Activated B cell treated with CpG ODN at 0.5 μM for 24 hours (primary cell): ENCODE measurements at regions of chr12 and their contacts with region 1.

Region 1: DNA sequence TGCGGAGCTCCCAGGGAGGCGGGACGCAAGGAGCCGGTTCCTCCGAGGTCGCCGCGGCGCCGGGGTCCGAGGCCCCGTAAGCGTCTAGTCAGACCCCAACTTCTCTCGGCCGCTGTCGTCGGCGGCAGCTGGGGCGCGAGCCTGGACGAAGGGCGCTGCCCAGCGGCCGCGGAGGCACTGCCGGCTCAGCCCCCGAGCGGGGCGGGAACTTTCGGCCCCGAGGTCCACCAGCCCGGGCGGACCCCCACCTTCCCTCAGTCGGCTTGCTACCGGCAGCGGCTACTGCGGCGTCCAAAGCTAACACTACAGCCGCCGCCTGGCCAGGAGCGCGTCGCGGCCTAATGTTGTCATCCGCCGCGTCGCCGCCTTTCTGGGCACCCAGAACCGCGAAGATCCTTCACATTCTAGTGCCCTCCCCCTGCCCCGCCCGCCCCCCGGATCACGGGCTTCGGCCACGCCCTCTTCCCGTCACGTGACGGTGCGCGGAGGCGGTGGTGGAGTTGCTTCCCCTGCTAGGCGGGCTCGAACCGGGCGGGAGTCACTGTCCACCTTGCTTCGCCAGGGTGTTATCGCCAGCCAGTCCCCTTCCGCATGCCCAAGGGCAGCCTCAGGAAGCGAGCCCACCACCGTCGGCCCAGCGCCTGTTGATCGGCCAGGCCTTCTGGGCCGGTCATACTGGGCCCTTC is at the start of gene OSBPL8:
- DNase-seq: peak; percentile 96
- ATAC-seq: peak; percentile 79
- H3K4me3 Mint-ChIP-seq: peak within 1 kb of the TSS; percentile 94
- H3K27ac Mint-ChIP-seq: peak within 1 kb of the TSS; percentile 95
- H3K4me1 Mint-ChIP-seq: peaks cover 45% of the 10 kb centered on the region
- H3K27me3 Mint-ChIP-seq: no peaks in the 10 kb centered on the region
- CTCF ChIP-seq: no peak
- total RNA-seq, gene OSBPL8: 73.8 and 79.6 TPM in 2 replicates

Region 2: DNA sequence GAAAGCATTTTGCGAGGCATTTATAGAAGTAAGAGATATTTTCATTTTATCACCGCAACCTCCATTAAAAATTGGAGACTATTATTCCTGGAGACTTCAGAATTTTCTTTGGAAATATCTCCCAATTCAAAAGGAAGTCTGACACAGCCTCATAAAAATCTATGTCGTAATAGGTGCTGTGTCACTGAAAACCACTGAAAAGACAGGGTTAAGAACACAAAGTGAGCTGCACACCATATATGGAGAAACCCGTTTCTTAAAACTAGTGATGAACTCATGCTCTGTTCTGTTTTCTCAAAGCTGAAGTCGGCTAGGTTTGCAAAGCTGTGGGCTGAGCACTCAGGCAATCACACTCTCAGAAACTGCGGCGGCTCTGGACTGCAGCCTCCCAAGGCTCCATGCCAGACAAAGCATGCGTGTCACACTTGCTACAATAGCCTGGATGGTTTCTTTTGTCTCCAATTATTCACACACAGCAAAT is 1079.0 kb before region 1 on chr12 and contains the start of gene GLIPR1:
- CTCF ChIA-PET with region 1: no interaction called
- POLR2A ChIA-PET with region 1: interaction called, 4 read pairs
- intact Hi-C with region 1: loop called (anchors 5 kb)
- DNase-seq: peak; percentile 40
- ATAC-seq: peak; percentile 79
- H3K4me3 Mint-ChIP-seq: peak within 1 kb of the TSS; percentile 96
- H3K27ac Mint-ChIP-seq: peak within 1 kb of the TSS; percentile 97
- H3K4me1 Mint-ChIP-seq: peaks cover 96% of the 10 kb centered on the region
- H3K27me3 Mint-ChIP-seq: no peaks in the 10 kb centered on the region
- CTCF ChIP-seq: no peak
- total RNA-seq, gene GLIPR1: 44.7 and 45.4 TPM in 2 replicates

Region 3: DNA sequence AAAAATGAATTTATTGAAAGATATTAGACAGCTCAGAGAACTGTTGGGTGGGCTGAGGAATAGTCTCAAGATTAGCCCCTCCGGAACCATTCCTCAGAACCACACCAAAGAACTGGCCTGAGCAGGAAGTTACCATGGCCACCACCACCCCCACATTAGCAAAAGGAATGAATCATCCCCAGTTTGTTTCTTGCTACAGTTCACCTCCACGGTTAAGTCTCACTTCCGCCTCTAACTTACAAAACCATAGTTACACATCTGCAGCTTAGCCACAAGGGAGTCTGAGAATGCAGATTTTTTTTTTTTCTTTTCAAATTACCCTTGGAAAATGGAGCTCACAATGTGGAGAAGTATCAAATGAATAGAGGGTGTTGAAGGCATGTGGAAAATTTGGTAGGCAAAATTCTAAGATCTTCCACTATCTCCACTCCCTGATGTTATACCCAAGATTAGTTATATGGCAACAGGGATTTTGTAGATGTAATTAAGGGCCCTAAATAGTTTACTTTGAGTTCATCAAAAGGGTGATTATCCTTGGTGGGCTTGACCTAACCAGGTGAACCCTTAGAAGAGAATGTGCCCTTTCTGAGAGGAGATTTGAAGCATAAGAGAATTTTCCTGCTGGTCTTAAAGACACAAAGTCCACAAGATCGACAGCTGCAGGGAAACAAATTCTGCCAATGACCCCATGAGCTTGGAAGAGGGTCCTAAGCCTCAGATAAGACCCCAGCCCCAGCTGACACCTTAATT is 918.3 kb before region 1 on chr12:
- CTCF ChIA-PET with region 1: no interaction called
- POLR2A ChIA-PET with region 1: no interaction called
- intact Hi-C with region 1: loop called (anchors 10 kb)
- DNase-seq: no peak
- ATAC-seq: peak; percentile 96
- H3K4me3 Mint-ChIP-seq: peak overlapping the region; percentile 26
- H3K27ac Mint-ChIP-seq: peak overlapping the region; percentile 51
- H3K4me1 Mint-ChIP-seq: peaks cover 33% of the 10 kb centered on the region
- H3K27me3 Mint-ChIP-seq: peaks cover under 1% of the 10 kb centered on the region
- CTCF ChIP-seq: no peak

Region 4: DNA sequence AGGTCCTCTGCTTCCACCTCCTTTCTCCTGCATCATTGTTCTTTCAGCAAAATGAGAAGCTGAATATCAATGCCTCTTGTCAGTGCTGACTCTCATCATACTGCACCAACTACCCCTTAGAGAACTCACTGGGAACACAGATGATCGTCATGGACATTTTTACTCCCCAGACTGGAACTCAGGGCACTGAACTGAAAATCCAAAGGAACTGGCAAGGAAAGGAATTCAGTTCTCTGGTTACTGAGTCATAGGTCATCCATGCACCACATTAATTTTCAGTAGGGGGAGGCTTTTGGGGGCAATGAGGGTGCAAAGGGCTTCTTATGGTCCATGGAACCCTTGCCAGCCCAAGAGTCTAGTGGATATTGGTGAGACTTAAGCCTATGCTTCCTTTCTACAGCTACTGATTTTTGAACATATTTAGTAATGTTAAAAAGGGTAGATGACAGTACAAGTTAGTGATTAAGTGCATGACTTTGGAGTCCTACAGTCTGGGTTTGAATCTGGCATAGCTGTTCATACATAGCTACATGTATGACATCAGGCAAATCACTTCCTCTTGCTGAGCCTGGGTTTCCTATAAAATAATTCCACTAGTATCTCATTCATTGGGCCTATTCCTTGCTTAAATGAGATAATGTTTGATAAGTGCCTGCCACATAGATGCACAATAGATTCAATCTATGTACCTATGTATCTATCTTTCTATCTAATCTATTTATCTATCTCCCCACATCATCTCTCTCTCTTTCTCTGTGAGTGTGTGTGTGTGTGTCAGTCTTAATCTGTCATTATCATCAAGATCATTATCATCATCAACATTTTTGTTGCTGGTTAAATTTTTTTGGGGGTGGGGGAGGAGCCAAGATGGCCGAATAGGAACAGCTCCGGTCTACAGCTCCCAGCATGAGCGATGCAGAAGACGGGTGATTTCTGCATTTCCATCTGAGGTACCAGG is 240.5 kb before region 1 on chr12:
- CTCF ChIA-PET with region 1: no interaction called
- POLR2A ChIA-PET with region 1: no interaction called
- intact Hi-C with region 1: no loop called
- DNase-seq: no peak
- ATAC-seq: no peak
- H3K4me3 Mint-ChIP-seq: no peak overlapping the region
- H3K27ac Mint-ChIP-seq: no peak overlapping the region
- H3K4me1 Mint-ChIP-seq: no peaks in the 10 kb centered on the region
- H3K27me3 Mint-ChIP-seq: peaks cover 2% of the 10 kb centered on the region
- CTCF ChIP-seq: no peak

Region 5: GRCh38 chr12:76337583-76337982 is 222.0 kb before region 1 on chr12:
- CTCF ChIA-PET with region 1: no interaction called
- POLR2A ChIA-PET with region 1: no interaction called
- intact Hi-C with region 1: no loop called
- DNase-seq: no peak
- ATAC-seq: no peak
- H3K4me3 Mint-ChIP-seq: no peak overlapping the region
- H3K27ac Mint-ChIP-seq: no peak overlapping the region
- H3K4me1 Mint-ChIP-seq: no peaks in the 10 kb centered on the region
- H3K27me3 Mint-ChIP-seq: no peaks in the 10 kb centered on the region
- CTCF ChIP-seq: no peak

Region 6: DNA sequence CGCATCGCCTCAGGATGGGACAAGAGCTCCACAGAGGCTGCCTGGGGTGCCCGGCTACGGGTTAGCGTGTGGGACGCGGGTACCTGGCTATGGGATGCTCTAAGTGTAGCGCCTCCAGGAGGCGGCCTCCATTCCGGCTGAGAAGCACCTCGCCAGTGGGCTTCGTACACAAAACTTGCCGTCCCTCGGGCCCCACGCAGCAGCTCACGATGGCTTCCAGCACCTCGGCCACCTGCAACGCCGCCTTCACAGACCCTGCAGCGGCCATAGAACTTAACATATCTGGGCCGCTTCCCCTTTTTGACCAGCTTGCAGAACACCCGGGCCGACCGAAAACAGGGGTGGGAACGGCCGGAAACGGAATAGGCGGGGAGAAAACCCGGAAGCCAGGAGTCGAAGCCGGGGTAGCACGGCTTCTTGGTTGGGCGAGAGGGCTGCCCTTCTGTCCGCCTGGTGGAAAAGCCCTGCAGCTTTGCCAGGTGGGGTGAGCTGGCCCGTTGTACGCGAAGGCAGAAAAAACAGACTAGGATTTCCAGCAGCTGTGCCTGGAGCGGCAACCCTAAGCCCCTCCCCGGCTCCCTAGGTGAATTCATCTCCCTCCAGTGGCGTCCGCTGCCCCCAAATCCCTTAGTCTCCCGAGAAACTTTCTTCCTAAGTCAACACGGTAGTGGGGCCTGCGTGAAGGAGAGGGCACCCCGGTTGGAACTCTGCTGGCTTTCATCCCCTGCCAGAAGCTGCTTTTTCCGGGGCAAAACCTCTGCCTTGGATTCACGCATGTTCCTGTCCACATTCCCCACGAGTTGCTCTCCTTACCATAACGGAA is 211.3 kb before region 1 on chr12 and contains the start of gene BBS10:
- CTCF ChIA-PET with region 1: no interaction called
- POLR2A ChIA-PET with region 1: interaction called, 19 read pairs
- intact Hi-C with region 1: loop called (anchors 1 kb)
- DNase-seq: peak; percentile 81
- ATAC-seq: peak; percentile 98
- H3K4me3 Mint-ChIP-seq: peak within 1 kb of the TSS; percentile 95
- H3K27ac Mint-ChIP-seq: peak within 1 kb of the TSS; percentile 93
- H3K4me1 Mint-ChIP-seq: peaks cover 35% of the 10 kb centered on the region
- H3K27me3 Mint-ChIP-seq: no peaks in the 10 kb centered on the region
- CTCF ChIP-seq: no peak
- total RNA-seq, gene BBS10: 7.9 and 8.0 TPM in 2 replicates

Region 7: DNA sequence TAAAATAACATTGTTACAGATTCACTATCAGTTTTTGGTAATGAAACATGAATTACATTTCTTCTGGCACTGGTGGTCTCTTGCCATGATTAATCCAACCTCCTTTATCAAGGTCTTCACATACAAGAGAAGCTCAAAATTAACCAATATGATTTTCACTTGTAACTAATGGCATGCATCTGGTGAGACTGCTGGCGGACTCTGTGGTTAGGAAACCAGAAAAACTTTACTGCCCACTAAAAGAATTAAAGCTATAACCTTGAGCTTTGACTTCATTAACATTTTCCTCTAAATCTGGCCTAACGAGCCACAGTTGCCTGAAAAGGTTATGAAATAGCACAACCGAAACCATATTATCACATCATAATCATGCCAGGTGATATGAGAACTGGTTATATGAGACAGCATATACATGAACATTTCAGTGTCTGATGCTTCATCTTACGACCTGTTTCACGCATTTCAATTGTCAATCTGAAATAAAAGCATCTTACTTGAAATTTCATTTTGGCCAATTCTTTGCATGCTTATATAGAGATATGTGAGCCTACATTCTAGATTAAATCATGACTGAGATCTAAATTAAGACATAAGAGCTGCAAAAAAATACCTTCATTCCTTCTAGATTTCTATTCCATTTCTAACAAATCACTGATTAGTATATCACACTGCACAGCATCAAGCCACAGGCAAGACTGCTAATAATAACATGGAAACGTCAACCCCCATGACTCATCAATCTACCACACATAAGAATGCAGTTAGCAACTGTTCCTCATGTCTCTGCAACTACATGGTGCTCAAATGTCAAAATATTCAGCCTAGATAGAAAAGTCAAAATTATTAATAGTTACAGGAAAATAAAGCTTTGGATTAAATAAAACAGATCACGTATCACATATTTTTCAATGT is 89.3 kb before region 1 on chr12:
- CTCF ChIA-PET with region 1: interaction called, 3 read pairs
- POLR2A ChIA-PET with region 1: interaction called, 3 read pairs
- intact Hi-C with region 1: loop called (anchors 5 kb)
- DNase-seq: no peak
- ATAC-seq: peak; percentile 84
- H3K4me3 Mint-ChIP-seq: no peak overlapping the region
- H3K27ac Mint-ChIP-seq: no peak overlapping the region
- H3K4me1 Mint-ChIP-seq: peaks cover 12% of the 10 kb centered on the region
- H3K27me3 Mint-ChIP-seq: no peaks in the 10 kb centered on the region
- CTCF ChIP-seq: no peak

Region 8: DNA sequence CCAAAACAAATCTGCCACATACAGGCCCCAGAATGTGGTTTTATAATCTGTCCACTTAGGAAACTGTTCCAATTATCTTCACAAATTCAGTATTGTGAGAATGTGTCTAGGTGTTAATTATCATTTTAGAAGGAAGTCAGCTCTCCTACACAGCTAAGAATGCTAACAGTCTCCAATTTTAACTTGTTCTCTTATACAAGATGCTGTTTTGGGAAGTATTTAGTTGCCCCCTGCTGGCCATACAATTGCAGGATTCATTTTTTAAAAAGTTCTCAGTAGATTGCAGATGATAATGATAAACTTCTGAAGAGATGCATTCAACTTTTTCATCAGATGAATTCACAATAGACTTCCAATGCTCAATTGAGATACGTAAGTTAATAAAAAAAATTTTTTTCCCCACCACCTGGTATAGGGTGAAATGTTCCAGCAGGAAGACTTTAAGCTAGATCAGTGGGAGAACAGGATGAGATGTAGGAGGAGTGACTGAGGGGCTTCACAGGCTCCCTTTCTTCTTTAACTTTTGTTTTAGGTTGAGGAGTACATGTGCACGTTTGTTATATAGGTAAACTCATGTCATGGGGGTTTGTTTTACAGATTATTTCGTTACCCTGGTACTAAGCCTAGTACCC is 27.3 kb after region 1 on chr12:
- CTCF ChIA-PET with region 1: interaction called, 10 read pairs
- POLR2A ChIA-PET with region 1: interaction called, 3 read pairs
- intact Hi-C with region 1: loop called (anchors 1 kb)
- DNase-seq: no peak
- ATAC-seq: peak; percentile 58
- H3K4me3 Mint-ChIP-seq: no peak overlapping the region
- H3K27ac Mint-ChIP-seq: no peak overlapping the region
- H3K4me1 Mint-ChIP-seq: peaks cover 9% of the 10 kb centered on the region
- H3K27me3 Mint-ChIP-seq: no peaks in the 10 kb centered on the region
- CTCF ChIP-seq: peak; percentile 82

Region 9: DNA sequence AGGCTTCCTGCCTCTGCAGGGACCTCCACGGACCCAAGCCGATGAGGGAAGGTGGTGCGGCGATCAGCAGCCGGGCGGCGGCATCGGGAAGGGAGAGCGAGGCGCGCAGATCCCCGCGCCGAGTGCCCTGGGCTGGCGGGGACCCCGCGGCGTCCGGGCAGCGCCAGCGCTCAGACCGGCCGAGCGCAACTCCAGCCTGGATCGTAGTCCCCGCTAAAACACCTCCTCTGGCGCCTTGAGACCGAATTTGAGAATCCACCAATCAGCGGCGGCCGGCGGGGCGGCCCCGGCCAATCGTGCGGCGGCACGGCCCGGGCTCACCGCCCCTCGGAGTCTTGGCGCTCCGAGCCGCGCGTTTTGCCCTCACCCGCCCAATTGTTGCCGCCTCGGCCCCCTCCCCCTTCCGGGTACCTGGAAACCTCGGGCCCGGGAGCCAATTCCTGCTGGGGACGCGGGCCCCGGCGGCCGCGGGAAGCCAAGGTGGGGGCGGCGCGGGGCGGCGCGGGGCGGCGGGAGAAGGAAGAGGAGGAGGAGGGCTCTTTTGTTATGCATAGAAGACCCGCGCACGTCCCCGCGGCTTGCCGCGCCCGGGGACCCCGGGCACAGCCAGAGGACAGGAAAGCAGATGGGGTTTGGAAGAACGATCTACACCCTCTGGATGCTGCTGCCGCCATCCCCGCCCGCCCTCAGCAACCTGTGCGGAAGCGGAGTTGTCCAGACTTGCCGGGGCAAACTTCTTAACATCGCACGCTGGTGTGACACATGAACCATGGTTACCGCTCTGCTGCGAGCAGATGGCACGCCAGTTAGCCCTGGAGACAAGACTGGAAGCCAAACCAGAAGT is 506.0 kb after region 1 on chr12 and contains the start of gene E2F7:
- CTCF ChIA-PET with region 1: no interaction called
- POLR2A ChIA-PET with region 1: no interaction called
- intact Hi-C with region 1: loop called (anchors 10 kb)
- DNase-seq: peak; percentile 81
- ATAC-seq: peak; percentile 86
- H3K4me3 Mint-ChIP-seq: peak within 1 kb of the TSS; percentile 90
- H3K27ac Mint-ChIP-seq: no peak within 1 kb of the TSS
- H3K4me1 Mint-ChIP-seq: peaks cover 36% of the 10 kb centered on the region
- H3K27me3 Mint-ChIP-seq: peaks cover 5% of the 10 kb centered on the region
- CTCF ChIP-seq: no peak
- total RNA-seq, gene E2F7: 0.71 and 0.95 TPM in 2 replicates